SK-N-SH (cell line): ENCODE measurements at regions of chr6 and their contacts with region 1.

Region 1: GRCh38 chr6:136792410-136793262 is at the start of gene MAP3K5:
- DNase-seq: peak; percentile 85
- H3K4me3 ChIP-seq: peak within 1 kb of the TSS; percentile 74 to 81
- H3K27ac ChIP-seq: peak within 1 kb of the TSS; percentile 70 to 92
- H3K4me1 ChIP-seq: peaks cover 2 to 6% of the 10 kb centered on the region in 2 experiments; a peak in 2 of 4 replicates
- H3K27me3 ChIP-seq: no peaks in the 10 kb centered on the region
- CTCF ChIP-seq: peak; percentile 75
- EP300 ChIP-seq: no peak
- RAD21 ChIP-seq: peak; percentile 87
- polyA plus RNA-seq, gene MAP3K5: 1.4 TPM in 2 replicates

Region 2: GRCh38 chr6:136014454-136015421 is 777.9 kb before region 1 on chr6:
- CTCF ChIA-PET with region 1: no interaction called
- POLR2A ChIA-PET with region 1: no interaction called
- DNase-seq: no peak
- H3K4me3 ChIP-seq: no peak overlapping the region
- H3K27ac ChIP-seq: peak overlapping the region; percentile 34 to 98; a peak in 3 of 4 replicates
- H3K4me1 ChIP-seq: peaks cover 11 to 27% of the 10 kb centered on the region in 2 experiments
- H3K27me3 ChIP-seq: no peaks in the 10 kb centered on the region
- CTCF ChIP-seq: no peak
- EP300 ChIP-seq: peak in 1 of 2 experiments; percentile 77; a peak in 3 of 4 replicates
- RAD21 ChIP-seq: no peak

Region 3: DNA sequence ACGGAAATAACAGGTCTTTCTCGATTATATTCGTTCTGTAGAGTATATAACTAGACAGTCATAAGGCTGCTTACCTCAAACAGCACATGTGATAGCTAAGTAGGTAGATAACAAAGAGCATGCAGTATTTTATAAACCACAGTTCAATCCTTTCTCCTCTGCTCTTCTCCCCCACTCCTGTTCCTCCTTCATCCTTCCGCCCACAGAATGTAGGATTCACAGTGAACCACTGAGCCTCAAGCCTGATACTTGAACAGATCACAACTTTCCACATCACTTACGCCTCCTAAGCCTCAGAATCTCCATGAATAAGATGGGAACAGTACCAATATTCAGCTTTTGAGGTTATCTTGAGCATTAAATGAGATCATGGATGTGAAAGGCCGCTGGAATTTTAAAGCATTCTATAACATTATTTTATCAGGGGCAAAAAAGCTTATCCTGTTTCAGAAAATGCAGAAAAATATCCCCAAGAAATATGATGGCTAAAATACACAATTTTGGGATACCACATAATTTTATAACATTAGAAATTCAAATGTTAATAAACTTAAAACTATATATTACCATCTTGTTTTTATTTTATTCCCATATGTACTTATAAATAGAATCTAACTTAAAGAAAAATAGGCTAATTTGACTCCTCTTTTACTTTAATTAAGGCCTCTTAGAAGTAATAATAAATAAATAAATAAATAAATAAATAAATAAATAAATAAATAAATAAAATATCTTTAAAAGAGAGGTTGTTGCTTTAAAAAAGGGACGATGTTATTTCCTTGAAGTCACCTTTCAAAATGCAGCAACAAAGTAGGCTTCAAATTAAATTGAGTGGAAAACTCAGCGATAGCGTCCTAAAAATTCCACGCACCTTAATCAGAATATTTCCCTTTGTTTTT is 575.9 kb before region 1 on chr6:
- CTCF ChIA-PET with region 1: no interaction called
- POLR2A ChIA-PET with region 1: no interaction called
- DNase-seq: no peak
- H3K4me3 ChIP-seq: no peak overlapping the region
- H3K27ac ChIP-seq: no peak overlapping the region
- H3K4me1 ChIP-seq: no peaks in the 10 kb centered on the region
- H3K27me3 ChIP-seq: no peaks in the 10 kb centered on the region
- CTCF ChIP-seq: no peak
- EP300 ChIP-seq: no peak
- RAD21 ChIP-seq: no peak

Region 4: DNA sequence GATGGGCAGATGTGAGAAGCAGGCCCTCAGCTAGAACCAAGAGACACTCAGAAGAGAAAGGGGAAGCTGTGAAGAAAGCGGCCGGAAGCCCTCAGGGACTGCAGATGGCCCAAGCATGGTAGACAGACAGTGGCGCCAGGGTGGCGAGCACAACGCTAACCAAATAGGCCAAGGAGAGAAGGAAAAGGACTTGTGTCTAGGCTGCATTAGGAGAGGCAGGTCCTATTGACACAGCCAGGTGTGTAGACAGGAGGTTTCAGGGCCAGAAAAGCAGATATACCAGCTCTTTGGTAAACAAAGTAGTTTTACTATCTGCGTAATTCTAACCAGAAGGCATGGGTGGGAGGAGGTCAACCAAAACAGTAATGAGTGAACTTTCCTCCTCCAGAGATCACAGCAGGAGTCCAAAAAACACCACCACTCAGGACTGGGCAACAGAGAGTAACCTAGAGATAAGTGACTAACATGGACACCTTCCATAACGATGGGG is 226.6 kb before region 1 on chr6:
- CTCF ChIA-PET with region 1: interaction called, 10 read pairs
- POLR2A ChIA-PET with region 1: no interaction called
- DNase-seq: no peak
- H3K4me3 ChIP-seq: no peak overlapping the region
- H3K27ac ChIP-seq: no peak overlapping the region
- H3K4me1 ChIP-seq: peaks cover 0 to 6% of the 10 kb centered on the region in 2 experiments; a peak in 2 of 4 replicates
- H3K27me3 ChIP-seq: no peaks in the 10 kb centered on the region
- CTCF ChIP-seq: no peak
- EP300 ChIP-seq: no peak
- RAD21 ChIP-seq: no peak

Region 5: DNA sequence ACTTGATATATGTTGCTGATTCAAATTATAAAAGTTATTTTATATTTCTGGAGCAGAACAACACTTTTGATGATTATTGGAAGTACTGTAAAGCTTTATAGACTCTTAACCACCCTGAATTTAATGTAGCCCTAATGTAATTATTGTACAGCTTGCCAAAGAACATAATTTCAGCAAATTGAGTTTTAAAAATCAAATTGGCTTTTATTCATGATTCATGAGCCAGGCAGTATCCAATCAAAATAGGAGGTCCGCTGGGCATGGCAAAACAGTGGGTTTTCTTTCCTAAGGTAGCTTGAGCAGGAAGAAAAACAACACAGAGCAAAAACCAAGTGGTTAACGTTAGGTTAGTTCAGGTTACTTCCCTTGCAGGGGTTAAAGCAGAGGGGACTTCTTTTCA is 177.6 kb before region 1 on chr6:
- CTCF ChIA-PET with region 1: interaction called, 36 read pairs
- POLR2A ChIA-PET with region 1: no interaction called
- DNase-seq: peak; percentile 37
- H3K4me3 ChIP-seq: no peak overlapping the region; a peak in 1 of 4 replicates
- H3K27ac ChIP-seq: peak overlapping the region; percentile 79 to 89; a peak in 3 of 4 replicates
- H3K4me1 ChIP-seq: peaks cover 5 to 32% of the 10 kb centered on the region in 2 experiments; a peak in 3 of 4 replicates
- H3K27me3 ChIP-seq: no peaks in the 10 kb centered on the region
- CTCF ChIP-seq: no peak
- EP300 ChIP-seq: 0 out of 4 replicates have a peak, but pooled peaks of 1 of the 2 experiments have one; percentile 10
- RAD21 ChIP-seq: no peak

Region 6: GRCh38 chr6:136657666-136658065 is 135.0 kb before region 1 on chr6:
- CTCF ChIA-PET with region 1: interaction called, 20 read pairs
- POLR2A ChIA-PET with region 1: interaction called, 4 read pairs
- DNase-seq: no peak
- H3K4me3 ChIP-seq: no peak overlapping the region
- H3K27ac ChIP-seq: no peak overlapping the region
- H3K4me1 ChIP-seq: no peaks in the 10 kb centered on the region
- H3K27me3 ChIP-seq: no peaks in the 10 kb centered on the region
- CTCF ChIP-seq: no peak
- EP300 ChIP-seq: no peak
- RAD21 ChIP-seq: no peak

Region 7: DNA sequence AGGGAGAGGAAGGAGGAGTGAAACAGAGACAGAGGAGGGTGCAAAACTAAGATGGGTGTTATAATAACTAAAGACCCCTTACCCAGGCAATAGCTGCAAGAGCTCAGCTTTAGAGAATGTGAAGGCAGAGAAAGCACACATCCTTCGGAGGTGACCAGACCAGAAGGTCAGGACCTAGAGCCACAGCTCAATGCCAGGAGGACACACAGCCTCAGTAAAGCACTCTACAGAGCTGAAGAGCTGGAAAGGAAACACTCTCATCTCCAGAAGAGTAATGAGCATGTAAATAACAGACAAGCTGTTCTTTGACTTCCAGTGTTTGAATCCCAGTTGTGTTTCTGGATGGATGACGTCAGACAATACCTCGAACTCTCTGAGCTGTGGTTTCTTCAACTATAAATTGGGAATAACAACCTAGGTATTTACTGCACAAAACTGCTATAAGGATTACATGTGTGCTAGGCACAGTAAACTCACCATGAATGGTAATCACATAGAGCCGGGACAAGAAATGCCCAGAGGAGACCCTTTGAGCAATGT is 63.6 kb before region 1 on chr6:
- CTCF ChIA-PET with region 1: interaction called, 12 read pairs
- POLR2A ChIA-PET with region 1: no interaction called
- DNase-seq: no peak
- H3K4me3 ChIP-seq: no peak overlapping the region
- H3K27ac ChIP-seq: no peak overlapping the region
- H3K4me1 ChIP-seq: peaks cover 0 to 4% of the 10 kb centered on the region in 2 experiments; a peak in 2 of 4 replicates
- H3K27me3 ChIP-seq: no peaks in the 10 kb centered on the region
- CTCF ChIP-seq: no peak
- EP300 ChIP-seq: no peak
- RAD21 ChIP-seq: no peak

Region 8: DNA sequence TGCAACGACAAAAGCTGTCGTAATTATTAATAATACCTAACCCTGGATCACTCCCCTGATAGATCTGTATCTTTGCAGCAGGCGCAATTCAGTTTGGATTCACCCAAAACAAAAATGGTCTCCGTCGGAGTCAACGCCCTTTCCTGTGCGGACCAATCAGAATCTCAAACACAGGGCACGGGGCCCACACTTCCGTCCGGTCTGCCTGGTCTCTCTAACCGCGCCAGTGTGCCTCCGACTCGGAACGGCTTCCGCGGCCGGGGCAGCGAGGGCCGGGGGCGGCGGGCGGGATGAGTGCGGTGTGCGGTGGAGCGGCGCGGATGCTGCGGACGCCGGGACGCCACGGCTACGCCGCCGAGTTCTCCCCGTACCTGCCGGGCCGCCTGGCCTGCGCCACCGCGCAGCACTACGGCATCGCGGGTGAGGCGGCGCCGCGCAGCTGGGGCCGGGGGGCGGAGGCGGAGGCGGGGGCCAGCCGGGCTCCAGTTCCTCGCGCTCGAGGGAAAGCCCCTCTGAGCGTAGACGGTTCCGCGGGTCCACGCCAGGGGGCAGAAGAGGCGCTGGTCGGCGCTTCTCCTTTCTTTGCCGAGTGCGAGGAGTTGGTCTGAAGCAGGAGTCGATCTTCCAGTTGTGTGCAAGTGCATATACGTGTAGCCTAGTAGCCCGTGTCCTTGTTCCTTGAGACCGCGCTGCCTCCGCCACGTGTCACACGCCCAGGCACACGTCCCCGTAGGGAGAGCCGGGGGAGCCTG is 29.9 kb after region 1 on chr6 and contains the start of gene PEX7:
- CTCF ChIA-PET with region 1: interaction called, 13 read pairs
- POLR2A ChIA-PET with region 1: interaction called, 5 read pairs
- DNase-seq: peak; percentile 93
- H3K4me3 ChIP-seq: peak within 1 kb of the TSS; percentile 61 to 66
- H3K27ac ChIP-seq: peak within 1 kb of the TSS; percentile 69 to 92
- H3K4me1 ChIP-seq: peaks cover 0 to 5% of the 10 kb centered on the region in 2 experiments; a peak in 1 of 4 replicates
- H3K27me3 ChIP-seq: no peaks in the 10 kb centered on the region
- CTCF ChIP-seq: peak; percentile 63
- EP300 ChIP-seq: no peak
- RAD21 ChIP-seq: peak; percentile 57
- polyA plus RNA-seq, gene PEX7: 10.8 and 13.1 TPM in 2 replicates